Thyroid gland (tissue), 4 donors: ENCODE measurements at regions of chr12 and their contacts with region 1.

Region 1: GRCh38 chr12:121334513-121335343 is 17.5 kb downstream of the ANAPC5 start:
- DNase-seq: no peak
- H3K4me3 ChIP-seq: no peak overlapping the region
- H3K27ac ChIP-seq: no peak overlapping the region
- H3K4me1 ChIP-seq: no peaks in the 10 kb centered on the region
- H3K27me3 ChIP-seq: no peaks in the 10 kb centered on the region
- CTCF ChIP-seq: peak; percentile 33 to 86 (median 74)
- POLR2A ChIP-seq: no peak

Region 2: DNA sequence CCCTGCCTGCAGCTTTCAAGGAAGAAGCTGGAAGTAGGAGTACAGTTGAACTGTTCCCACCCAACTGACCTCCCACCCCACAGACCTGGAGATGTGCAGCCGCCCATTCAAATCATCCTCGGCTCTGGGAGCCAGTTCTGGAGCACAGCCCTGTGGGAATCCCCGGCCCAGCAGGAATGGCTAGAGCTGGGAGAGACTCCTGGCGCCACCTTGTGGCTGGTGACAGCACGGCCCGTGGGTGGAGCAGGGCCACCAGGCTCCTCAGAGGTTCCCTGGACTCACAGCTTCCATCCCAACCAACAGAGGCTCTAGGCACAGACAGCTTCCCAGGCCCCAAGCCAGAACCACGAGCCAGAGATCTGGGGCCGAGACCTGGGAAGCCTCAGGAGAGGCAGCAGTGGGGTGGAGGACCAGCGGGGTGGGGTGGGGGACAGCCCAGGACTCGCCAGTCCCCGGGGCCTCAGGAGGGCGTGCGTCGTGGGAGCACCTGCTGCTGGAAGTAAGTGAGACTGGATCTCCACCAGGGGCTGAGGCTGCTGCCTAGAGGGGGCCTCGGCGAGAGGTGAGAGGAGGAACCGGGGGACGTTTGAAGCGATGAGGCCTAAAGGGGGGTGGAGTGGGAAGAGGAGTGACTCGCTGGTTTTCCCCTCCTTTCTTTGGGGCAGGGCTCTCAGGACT is 108.6 kb after region 1 on chr12:
- intact Hi-C with region 1: loop called (anchors 5 kb)
- DNase-seq: peak; percentile 79 to 82
- H3K4me3 ChIP-seq: no peak overlapping the region
- H3K27ac ChIP-seq: no peak overlapping the region
- H3K4me1 ChIP-seq: peaks cover 0 to 6% of the 10 kb centered on the region in 2 donors
- H3K27me3 ChIP-seq: no peaks in the 10 kb centered on the region
- CTCF ChIP-seq: peak; percentile 54 to 95 (median 72)
- POLR2A ChIP-seq: no peak